GM12878 (cell line): ENCODE measurements at regions of chr1 and their contacts with region 1.

Region 1: GRCh38 chr1:174982971-174983689 is 16.6 kb upstream of the CACYBP start:
- DNase-seq: no peak
- ATAC-seq: no peak
- H3K4me3 ChIP-seq: no peak overlapping the region
- H3K27ac ChIP-seq: no peak overlapping the region
- H3K4me1 ChIP-seq: no peaks in the 10 kb centered on the region
- H3K27me3 ChIP-seq: no peaks in the 10 kb centered on the region
- CTCF ChIP-seq: peak; percentile 44 to 49 (median 49); a peak in 5 of 6 replicates
- EP300 ChIP-seq: no peak
- POLR2A ChIP-seq: no peak
- RAD21 ChIP-seq: peak; percentile 58

Region 2: GRCh38 chr1:174769961-174770549 is 213.1 kb before region 1 on chr1:
- CTCF ChIA-PET with region 1: interaction called, 32 read pairs
- POLR2A ChIA-PET with region 1: no interaction called
- RAD21 ChIA-PET with region 1: interaction called, 14 read pairs
- SMC1A ChIA-PET with region 1: interaction called, 16 read pairs
- in situ Hi-C with region 1: no loop called
- intact Hi-C with region 1: loop called (anchors 1 kb)
- DNase-seq: peak; percentile 17
- ATAC-seq: peak; percentile 71
- H3K4me3 ChIP-seq: no peak overlapping the region
- H3K27ac ChIP-seq: no peak overlapping the region
- H3K4me1 ChIP-seq: no peaks in the 10 kb centered on the region
- H3K27me3 ChIP-seq: no peaks in the 10 kb centered on the region
- CTCF ChIP-seq: peak; percentile 54 to 80 (median 61)
- EP300 ChIP-seq: no peak
- POLR2A ChIP-seq: no peak
- RAD21 ChIP-seq: peak; percentile 82

Region 3: GRCh38 chr1:174800216-174800851 is 182.8 kb before region 1 on chr1:
- CTCF ChIA-PET with region 1: interaction called, 6 read pairs
- POLR2A ChIA-PET with region 1: interaction called, 3 read pairs
- RAD21 ChIA-PET with region 1: interaction called, 5 read pairs
- SMC1A ChIA-PET with region 1: interaction called, 11 read pairs
- in situ Hi-C with region 1: no loop called
- intact Hi-C with region 1: no loop called
- DNase-seq: no peak
- ATAC-seq: peak; percentile 21
- H3K4me3 ChIP-seq: peak overlapping the region; percentile 79
- H3K27ac ChIP-seq: peak overlapping the region; percentile 77
- H3K4me1 ChIP-seq: peaks cover 23% of the 10 kb centered on the region
- H3K27me3 ChIP-seq: no peaks in the 10 kb centered on the region
- CTCF ChIP-seq: no peak
- EP300 ChIP-seq: no peak
- POLR2A ChIP-seq: no peak
- RAD21 ChIP-seq: no peak

Region 4: DNA sequence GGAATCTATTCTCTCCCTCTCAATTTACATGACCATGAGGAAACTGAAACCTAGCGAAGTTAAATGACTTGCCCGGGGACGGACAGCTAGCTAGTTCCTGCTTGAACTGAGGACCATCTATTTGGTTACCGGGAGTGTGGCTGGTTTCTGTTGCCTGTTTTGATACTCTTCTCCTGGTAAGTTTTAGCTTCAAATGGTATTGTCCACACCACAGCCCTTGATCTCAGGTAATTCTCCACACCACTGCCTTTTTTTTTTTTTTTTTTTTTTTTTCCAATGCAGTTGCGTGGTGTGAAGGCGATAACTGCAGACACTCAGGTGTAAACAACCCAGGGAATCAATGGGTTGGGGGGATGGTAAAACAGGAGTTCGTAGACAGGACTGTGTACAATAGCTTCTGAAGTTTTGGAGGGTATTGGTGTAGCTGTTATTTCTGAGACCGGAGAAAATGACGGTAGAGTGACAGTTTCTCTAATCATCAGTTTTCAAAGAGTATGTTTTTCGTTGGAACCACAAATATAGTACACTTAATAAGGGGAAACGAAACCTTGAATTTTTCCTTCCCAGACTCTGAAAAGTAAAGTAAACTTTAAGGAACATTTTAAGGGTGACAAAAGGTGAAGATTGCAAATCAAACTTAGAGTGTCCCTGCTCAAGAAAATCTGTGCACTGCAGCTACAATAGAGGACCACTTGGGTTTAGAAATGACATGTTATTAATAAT is 108.6 kb before region 1 on chr1:
- CTCF ChIA-PET with region 1: interaction called, 19 read pairs
- POLR2A ChIA-PET with region 1: no interaction called
- RAD21 ChIA-PET with region 1: interaction called, 4 read pairs
- SMC1A ChIA-PET with region 1: interaction called, 9 read pairs
- in situ Hi-C with region 1: no loop called
- intact Hi-C with region 1: no loop called
- DNase-seq: peak; percentile 40
- ATAC-seq: peak; percentile 83
- H3K4me3 ChIP-seq: peak overlapping the region; percentile 54; the same call in 1 of the 2 replicates
- H3K27ac ChIP-seq: peak overlapping the region; percentile 47
- H3K4me1 ChIP-seq: peaks cover 25% of the 10 kb centered on the region
- H3K27me3 ChIP-seq: no peaks in the 10 kb centered on the region
- CTCF ChIP-seq: no peak
- EP300 ChIP-seq: no peak
- POLR2A ChIP-seq: no peak
- RAD21 ChIP-seq: no peak

Region 5: DNA sequence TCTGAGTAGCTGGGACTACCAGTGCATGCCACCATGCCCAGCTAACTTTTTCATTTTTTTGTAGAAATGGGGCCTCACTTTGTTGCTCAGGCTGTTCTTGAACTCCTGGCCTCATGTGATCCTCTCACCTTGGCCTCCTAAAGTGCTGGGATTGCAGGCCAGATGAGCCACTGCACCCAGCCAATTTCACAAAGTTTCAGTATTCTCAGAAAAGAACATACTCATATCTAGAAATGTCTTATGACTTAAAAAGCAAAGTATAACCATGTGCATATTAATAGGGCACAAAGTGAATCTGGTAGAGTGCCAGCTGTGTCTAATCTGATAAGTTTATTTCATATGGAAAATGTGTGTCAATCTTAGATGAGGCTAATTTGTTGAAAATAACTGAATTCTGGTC is 70.9 kb before region 1 on chr1:
- CTCF ChIA-PET with region 1: interaction called, 12 read pairs
- POLR2A ChIA-PET with region 1: no interaction called
- RAD21 ChIA-PET with region 1: interaction called, 4 read pairs
- SMC1A ChIA-PET with region 1: interaction called, 15 read pairs
- in situ Hi-C with region 1: no loop called
- intact Hi-C with region 1: no loop called
- DNase-seq: peak; percentile 15
- ATAC-seq: peak; percentile 73
- H3K4me3 ChIP-seq: no peak overlapping the region
- H3K27ac ChIP-seq: no peak overlapping the region; the same call in 1 of the 2 replicates
- H3K4me1 ChIP-seq: peaks cover 15% of the 10 kb centered on the region; the same call in 1 of the 2 replicates
- H3K27me3 ChIP-seq: no peaks in the 10 kb centered on the region
- CTCF ChIP-seq: no peak
- EP300 ChIP-seq: no peak; a peak in 1 of 4 replicates
- POLR2A ChIP-seq: no peak
- RAD21 ChIP-seq: no peak